H1 (cell line): ENCODE measurements at regions of chr17 and their contacts with region 1.

Region 1: GRCh38 chr17:34146440-34147043 is 108.5 kb upstream of the CCL2 start:
- DNase-seq: peak in 1 of 2 experiments; percentile 90
- H3K4me3 ChIP-seq: no peak overlapping the region
- H3K27ac ChIP-seq: no peak overlapping the region
- H3K4me1 ChIP-seq: peaks cover 0 to 4% (median 0%) of the 10 kb centered on the region in 4 experiments; a peak in 3 of 7 replicates
- H3K27me3 ChIP-seq: no peaks in the 10 kb centered on the region
- CTCF ChIP-seq: peak; percentile 93 to 99 (median 97)
- EP300 ChIP-seq: no peak
- POLR2A ChIP-seq: no peak
- RAD21 ChIP-seq: peak; percentile 93 to 96

Region 2: GRCh38 chr17:33927732-33928133 is 218.8 kb before region 1 on chr17:
- CTCF ChIA-PET with region 1: interaction called, 32 read pairs
- POLR2A ChIA-PET with region 1: no interaction called
- DNase-seq: no peak
- H3K4me3 ChIP-seq: no peak overlapping the region
- H3K27ac ChIP-seq: no peak overlapping the region
- H3K4me1 ChIP-seq: peaks cover 6 to 29% (median 18%) of the 10 kb centered on the region in 4 experiments
- H3K27me3 ChIP-seq: peaks cover 0 to 2% (median 0%) of the 10 kb centered on the region in 4 experiments; a peak in 1 of 7 replicates
- CTCF ChIP-seq: peak in 2 of 3 experiments; percentile 43 to 50; a peak in 2 of 4 replicates
- EP300 ChIP-seq: no peak
- POLR2A ChIP-seq: no peak
- RAD21 ChIP-seq: peak; percentile 62 to 74

Region 3: GRCh38 chr17:34081269-34081668 is 65.3 kb before region 1 on chr17:
- CTCF ChIA-PET with region 1: interaction called, 157 read pairs
- POLR2A ChIA-PET with region 1: no interaction called
- DNase-seq: peak in 1 of 2 experiments; percentile 57
- H3K4me3 ChIP-seq: no peak overlapping the region
- H3K27ac ChIP-seq: no peak overlapping the region
- H3K4me1 ChIP-seq: peaks cover 0 to 9% (median 2%) of the 10 kb centered on the region in 4 experiments; a peak in 4 of 7 replicates
- H3K27me3 ChIP-seq: no peaks in the 10 kb centered on the region
- CTCF ChIP-seq: peak; percentile 32 to 82 (median 81)
- EP300 ChIP-seq: no peak
- POLR2A ChIP-seq: no peak
- RAD21 ChIP-seq: peak; percentile 72 to 79

Region 4: DNA sequence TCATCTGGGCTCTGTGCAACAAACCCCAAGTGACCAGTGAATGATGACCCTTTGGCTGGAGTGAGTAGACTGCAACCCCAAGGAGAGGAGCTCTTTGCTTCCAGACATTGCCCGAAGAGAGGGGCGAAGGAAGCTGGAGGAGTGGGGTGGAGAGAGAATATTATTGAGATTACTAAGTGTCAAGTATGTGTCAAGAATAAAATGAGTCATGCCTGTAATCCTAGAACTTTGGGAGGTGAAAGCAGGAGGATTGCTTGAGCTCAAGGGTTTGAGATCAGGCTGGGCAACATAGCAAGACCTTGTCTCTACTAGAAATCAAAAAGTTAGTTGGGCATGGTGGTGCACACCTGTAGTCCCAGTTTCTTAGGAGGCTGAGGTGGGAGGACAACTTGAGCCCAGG is 33.5 kb before region 1 on chr17:
- CTCF ChIA-PET with region 1: interaction called, 19 read pairs
- POLR2A ChIA-PET with region 1: no interaction called
- DNase-seq: peak in 1 of 2 experiments; percentile 29
- H3K4me3 ChIP-seq: no peak overlapping the region
- H3K27ac ChIP-seq: no peak overlapping the region
- H3K4me1 ChIP-seq: no peaks in the 10 kb centered on the region; a peak in 1 of 7 replicates
- H3K27me3 ChIP-seq: no peaks in the 10 kb centered on the region
- CTCF ChIP-seq: no peak
- EP300 ChIP-seq: no peak
- POLR2A ChIP-seq: no peak
- RAD21 ChIP-seq: no peak

Region 5: DNA sequence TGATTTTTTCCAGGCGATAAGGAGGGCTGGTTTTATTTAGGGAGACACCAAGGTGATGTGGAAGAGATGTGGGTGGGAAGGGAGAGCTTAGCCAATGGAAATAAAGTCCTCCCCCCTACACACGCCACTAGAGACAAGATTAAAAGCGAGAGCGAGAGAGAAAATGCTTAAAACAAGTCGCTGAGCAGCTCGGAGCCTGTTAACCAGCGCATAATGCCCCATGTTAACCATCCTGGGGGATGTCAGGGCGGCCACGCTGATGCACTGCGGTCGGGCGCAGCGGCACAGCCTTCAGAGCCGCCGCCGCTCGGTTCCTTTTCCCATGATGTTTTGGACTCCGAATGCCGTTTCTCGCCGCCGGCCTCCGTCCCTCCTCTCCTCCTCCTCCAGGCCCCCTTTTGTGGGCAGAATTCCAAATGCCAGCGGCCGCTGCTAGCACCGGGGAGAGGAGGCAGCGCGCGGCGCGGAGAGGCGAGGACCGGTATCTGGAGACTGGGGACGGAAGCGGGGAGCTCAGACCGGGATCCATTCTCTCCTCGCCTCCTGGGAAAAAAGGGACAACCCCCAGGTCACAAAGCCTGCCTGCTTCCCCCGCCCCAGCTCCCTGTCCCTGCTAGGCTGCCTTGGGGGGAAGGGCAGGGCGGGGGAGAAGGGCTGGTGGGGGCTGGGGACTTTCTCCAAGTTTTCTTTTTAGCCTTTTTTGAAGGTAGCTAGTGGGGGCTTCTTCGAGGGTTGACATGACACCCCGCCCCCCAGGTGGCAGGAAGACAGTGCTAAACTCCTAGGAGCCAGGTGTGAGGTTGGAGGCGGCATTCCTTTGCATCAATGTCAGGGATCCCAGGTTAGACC is 10.4 kb after region 1 on chr17:
- CTCF ChIA-PET with region 1: interaction called, 78 read pairs
- POLR2A ChIA-PET with region 1: interaction called, 16 read pairs
- DNase-seq: peak in 1 of 2 experiments; percentile 79
- H3K4me3 ChIP-seq: peak overlapping the region; percentile 41 to 66 (median 52)
- H3K27ac ChIP-seq: peak overlapping the region; percentile 82
- H3K4me1 ChIP-seq: peaks cover 19 to 40% (median 27%) of the 10 kb centered on the region in 4 experiments
- H3K27me3 ChIP-seq: peaks cover 0 to 15% (median 12%) of the 10 kb centered on the region in 4 experiments; a peak in 3 of 7 replicates
- CTCF ChIP-seq: no peak
- EP300 ChIP-seq: no peak
- POLR2A ChIP-seq: peak in 1 of 2 experiments; percentile 81; a peak in 2 of 3 replicates
- RAD21 ChIP-seq: no peak

Region 6: DNA sequence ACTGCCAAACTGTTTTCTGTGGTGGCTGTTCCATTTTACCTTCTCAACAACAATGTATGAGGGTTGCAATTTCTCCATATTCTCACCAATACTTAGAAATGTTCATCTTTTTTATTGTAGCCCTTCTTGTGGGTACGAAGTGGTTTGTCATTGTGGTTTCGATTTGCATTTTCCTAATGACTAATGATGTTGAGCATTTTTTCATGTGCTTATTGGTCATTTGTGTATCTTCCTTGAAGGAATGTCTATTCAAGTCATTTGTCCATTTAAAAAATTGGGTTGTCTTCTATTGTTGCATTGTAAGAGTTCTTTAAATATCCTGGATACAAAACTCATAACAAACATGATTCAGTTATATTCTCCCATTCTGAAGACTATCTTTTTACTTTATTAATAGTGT is 61.0 kb after region 1 on chr17:
- CTCF ChIA-PET with region 1: no interaction called
- POLR2A ChIA-PET with region 1: no interaction called
- DNase-seq: no peak
- H3K4me3 ChIP-seq: no peak overlapping the region
- H3K27ac ChIP-seq: no peak overlapping the region
- H3K4me1 ChIP-seq: no peaks in the 10 kb centered on the region
- H3K27me3 ChIP-seq: no peaks in the 10 kb centered on the region
- CTCF ChIP-seq: no peak
- EP300 ChIP-seq: no peak
- POLR2A ChIP-seq: no peak
- RAD21 ChIP-seq: no peak

Region 7: GRCh38 chr17:34368946-34369500 is 222.5 kb after region 1 on chr17:
- CTCF ChIA-PET with region 1: no interaction called
- POLR2A ChIA-PET with region 1: no interaction called
- DNase-seq: peak in 1 of 2 experiments; percentile 14
- H3K4me3 ChIP-seq: no peak overlapping the region
- H3K27ac ChIP-seq: no peak overlapping the region
- H3K4me1 ChIP-seq: no peaks in the 10 kb centered on the region
- H3K27me3 ChIP-seq: no peaks in the 10 kb centered on the region
- CTCF ChIP-seq: no peak
- EP300 ChIP-seq: no peak
- POLR2A ChIP-seq: no peak
- RAD21 ChIP-seq: no peak